B cell (primary cell): ENCODE measurements at regions of chr2 and their contacts with region 1.

Region 1: DNA sequence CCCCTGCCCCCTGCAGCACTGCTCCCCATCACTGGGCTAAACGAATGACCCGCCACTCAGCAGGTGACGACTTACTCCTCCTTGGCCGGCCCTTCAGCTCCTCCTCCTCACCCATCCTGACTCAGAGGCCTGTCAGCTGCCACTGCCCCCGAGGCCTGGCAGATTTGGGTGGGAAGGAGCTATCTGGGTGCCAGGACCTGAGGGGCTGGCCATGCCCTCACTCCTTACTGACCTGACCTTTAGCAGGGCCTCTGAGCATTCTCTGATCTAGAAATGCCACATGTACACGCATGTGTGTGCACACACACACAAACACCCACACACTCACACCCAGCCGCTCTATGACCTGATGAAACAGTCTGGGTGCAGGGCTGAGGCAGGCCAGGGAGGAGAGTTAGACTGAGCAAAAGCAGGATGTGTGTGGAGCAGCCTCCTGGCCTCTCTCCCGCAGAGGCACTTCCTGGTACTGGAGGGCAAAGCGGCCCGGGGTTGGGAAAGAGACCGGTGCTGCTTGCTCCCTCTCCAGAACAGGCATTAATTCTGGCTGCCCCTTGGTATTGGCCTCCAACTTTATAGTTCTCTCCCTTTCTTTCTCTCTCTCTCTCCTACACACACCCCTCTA is 68.0 kb downstream of the ZFP36L2 start:
- DNase-seq: no peak
- ATAC-seq: peak; percentile 7
- H3K4me3 ChIP-seq: peak overlapping the region in 1 of 5 experiments; percentile 14
- H3K4me3 Mint-ChIP-seq: peak overlapping the region; percentile 81
- H3K27ac ChIP-seq: peak overlapping the region; percentile 80 to 84
- H3K27ac Mint-ChIP-seq: peak overlapping the region; percentile 97
- H3K4me1 ChIP-seq: peaks cover 27 to 51% of the 10 kb centered on the region in 2 donors
- H3K4me1 Mint-ChIP-seq: peaks cover 57% of the 10 kb centered on the region
- H3K27me3 ChIP-seq: no peaks in the 10 kb centered on the region
- H3K27me3 Mint-ChIP-seq: no peaks in the 10 kb centered on the region
- CTCF ChIP-seq: no peak

Region 2: DNA sequence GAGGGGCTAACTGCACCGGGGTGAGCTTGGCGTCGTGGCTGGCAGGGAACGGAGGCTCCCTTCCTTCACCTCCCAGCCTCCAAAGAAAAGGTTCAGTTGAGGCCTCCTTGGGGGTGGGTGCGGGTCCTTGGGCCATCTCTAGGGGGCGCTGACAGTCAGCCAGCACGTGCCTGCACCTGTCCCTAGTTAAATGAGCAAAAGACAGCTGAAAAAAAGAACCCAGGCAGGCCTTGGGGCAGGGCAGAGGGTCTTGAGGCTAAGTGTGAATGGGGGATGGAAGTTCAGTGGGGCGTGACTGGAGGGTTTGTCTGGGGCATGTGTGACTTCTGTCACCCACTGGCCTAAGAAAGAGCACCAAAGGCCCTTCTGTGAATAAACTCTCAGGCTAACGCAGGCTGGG is 11.6 kb after region 1 on chr2:
- CTCF ChIA-PET with region 1: interaction called, 12 read pairs
- POLR2A ChIA-PET with region 1: interaction called, 18 read pairs
- intact Hi-C with region 1: loop called (anchors 1 kb)
- DNase-seq: peak; percentile 59
- ATAC-seq: no peak
- H3K4me3 ChIP-seq: peak overlapping the region in 3 of 5 experiments; percentile 2 to 53 (median 35)
- H3K4me3 Mint-ChIP-seq: peak overlapping the region; percentile 87
- H3K27ac ChIP-seq: peak overlapping the region; percentile 85 to 91
- H3K27ac Mint-ChIP-seq: peak overlapping the region; percentile 100
- H3K4me1 ChIP-seq: peaks cover 69 to 84% of the 10 kb centered on the region in 2 donors
- H3K4me1 Mint-ChIP-seq: peaks cover 79% of the 10 kb centered on the region
- H3K27me3 ChIP-seq: no peaks in the 10 kb centered on the region
- H3K27me3 Mint-ChIP-seq: no peaks in the 10 kb centered on the region
- CTCF ChIP-seq: peak; percentile 46

Region 3: DNA sequence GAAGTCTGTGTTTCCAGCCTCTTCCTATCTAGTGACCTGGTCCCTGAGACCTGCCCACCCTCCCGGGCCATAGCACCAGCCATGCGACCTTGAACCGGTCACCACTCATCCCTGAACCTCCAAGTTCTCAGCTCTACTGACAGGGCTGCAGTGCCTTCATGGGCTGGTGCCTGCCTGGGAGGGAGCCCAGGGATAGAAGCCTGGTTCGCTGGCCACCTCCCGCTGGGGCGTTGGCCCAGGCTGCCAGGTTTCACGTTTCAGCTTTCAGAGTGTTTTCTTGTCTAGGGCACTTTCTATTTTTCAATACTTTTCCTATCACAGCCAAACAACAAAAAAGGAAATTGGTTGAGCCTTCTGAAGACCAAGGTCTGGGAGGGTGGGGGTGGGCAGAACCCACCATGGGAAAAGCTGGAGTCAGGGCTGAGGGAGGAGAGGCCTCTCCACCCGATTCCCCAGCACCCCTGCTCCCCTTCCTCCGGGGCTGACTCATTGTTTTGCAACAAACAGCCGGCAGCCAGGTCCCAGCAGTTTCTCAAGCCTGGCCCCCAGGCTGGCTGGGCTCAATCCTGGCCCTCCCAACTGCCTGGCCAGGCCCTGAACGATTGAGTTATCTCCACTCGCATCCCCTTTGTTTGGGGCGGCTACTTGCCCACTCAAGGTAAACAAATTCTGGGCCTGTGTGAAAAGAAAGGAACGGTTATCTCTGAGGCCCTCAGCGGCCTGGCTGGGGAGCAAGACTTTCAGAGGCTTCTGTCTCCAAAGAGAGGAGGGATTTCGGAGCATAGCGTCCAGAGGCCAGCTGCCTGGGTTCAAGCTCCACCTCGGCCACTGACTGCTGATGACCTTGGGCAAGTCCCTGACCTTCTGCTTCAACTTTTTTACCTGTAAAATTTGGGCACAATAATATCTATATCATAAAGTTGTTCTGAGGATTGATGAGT is 20.5 kb after region 1 on chr2:
- CTCF ChIA-PET with region 1: interaction called, 4 read pairs
- POLR2A ChIA-PET with region 1: interaction called, 3 read pairs
- intact Hi-C with region 1: loop called (anchors 1 kb)
- DNase-seq: no peak
- ATAC-seq: no peak
- H3K4me3 ChIP-seq: no peak overlapping the region
- H3K4me3 Mint-ChIP-seq: no peak overlapping the region
- H3K27ac ChIP-seq: peak overlapping the region in 1 of 2 donors; percentile 50
- H3K27ac Mint-ChIP-seq: peak overlapping the region; percentile 76
- H3K4me1 ChIP-seq: peaks cover 39 to 51% of the 10 kb centered on the region in 2 donors
- H3K4me1 Mint-ChIP-seq: peaks cover 52% of the 10 kb centered on the region
- H3K27me3 ChIP-seq: no peaks in the 10 kb centered on the region
- H3K27me3 Mint-ChIP-seq: no peaks in the 10 kb centered on the region
- CTCF ChIP-seq: no peak